ENCODE measurements at regions of chr1 and their contacts with region 1.

Region 1: DNA sequence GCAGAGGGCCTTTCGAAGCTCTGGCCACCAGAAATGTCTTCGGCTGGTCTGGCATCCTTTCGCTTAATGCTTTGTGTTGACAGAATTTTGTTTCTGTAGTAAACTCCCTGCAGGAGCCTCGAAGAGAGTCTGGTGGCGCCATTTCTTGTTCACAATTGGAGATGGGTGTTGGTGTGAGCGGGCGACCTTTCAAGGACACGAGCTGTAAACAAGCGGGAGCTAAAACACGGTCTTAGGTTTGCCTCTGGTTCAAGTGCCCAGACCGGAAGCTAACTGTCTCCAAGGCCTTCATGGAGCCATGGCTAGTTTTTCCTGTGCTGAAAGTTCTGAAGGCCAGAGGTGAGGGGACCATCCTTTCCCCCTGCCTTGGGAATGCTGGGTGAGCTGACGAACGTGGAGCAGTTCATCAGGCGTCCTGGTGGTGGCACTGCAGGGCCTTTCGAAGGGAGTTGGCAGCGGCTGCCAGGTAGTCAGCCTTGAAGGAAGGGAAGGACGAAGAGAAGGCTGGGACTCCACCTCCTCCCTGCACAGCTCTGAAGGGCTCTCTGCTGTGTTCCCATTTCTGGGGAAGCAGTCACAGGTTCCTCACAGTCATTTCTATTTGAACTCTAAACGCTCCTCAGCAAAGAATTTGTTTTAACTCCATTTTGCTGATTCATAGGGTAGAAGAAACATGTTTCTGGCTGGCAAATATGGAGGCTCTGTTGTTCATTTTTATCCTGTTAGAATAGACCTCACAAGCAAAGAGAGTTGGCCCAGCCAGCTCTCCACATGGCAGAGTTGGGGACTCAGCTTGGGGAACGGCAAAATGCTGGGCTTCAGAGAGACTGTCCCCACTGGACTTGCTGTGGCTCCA is 35.2 kb downstream of the URB2 start:
- DNase-seq: peak; percentile 90
- H3K4me3 Mint-ChIP-seq: no peak overlapping the region
- H3K27ac Mint-ChIP-seq: no peak overlapping the region
- H3K4me1 Mint-ChIP-seq: peaks cover 11% of the 10 kb centered on the region
- H3K27me3 Mint-ChIP-seq: no peaks in the 10 kb centered on the region

Region 2: DNA sequence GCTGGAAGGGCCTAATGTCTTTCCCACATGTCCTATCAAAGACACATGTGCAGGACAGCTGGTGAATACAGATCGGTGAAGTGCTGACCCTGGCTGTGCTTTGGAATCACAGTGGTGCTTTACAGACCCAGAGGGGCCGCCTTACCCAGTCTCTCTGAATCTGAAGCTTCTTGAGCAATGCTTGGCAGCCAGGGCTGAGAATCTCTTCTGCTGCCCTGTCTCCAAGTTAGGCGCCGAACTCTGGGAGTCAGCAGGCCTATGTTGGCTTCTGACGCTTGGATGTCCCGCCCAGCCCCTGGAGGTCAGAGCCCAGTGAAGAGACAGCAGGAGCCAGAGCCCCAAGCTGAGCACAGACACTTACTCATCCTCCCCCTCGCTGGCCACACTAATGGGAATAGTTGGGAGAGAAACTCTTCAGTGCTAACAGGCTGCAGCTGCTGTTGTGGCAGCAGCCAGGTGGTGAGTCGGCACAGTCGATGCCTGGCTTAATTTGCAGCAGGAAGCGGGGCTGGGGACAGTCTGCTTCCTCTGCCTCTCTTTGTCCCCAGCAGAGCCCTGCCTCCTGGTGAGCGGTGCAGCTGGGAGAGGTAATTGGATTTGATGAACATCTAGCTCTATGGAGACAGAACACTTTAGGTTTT is 32.9 kb after region 1 on chr1:
- intact Hi-C with region 1: no loop called
- DNase-seq: peak; percentile 50
- H3K4me3 Mint-ChIP-seq: no peak overlapping the region
- H3K27ac Mint-ChIP-seq: no peak overlapping the region
- H3K4me1 Mint-ChIP-seq: peaks cover 12% of the 10 kb centered on the region
- H3K27me3 Mint-ChIP-seq: peaks cover 2% of the 10 kb centered on the region

Region 3: DNA sequence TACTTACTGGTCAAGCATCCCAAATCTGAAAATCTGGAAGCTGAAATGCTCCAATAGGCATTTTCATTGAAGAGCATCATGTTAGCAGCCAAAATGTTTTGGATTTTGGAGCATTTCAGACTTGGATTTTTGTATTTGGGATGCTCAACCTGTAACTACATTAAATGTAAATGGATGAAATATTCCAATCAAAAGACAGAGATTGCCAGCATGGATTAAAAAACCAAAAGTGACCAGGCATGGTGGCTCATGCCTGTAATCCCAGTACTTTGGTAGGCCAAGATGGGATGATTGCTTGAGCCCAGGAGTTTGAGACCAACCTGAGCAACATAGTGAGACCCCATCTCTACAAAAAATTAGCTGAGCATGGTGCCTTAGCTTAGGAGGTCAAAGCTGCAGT is 75.1 kb after region 1 on chr1:
- intact Hi-C with region 1: loop called (anchors 5 kb)
- DNase-seq: no peak
- H3K4me3 Mint-ChIP-seq: no peak overlapping the region
- H3K27ac Mint-ChIP-seq: no peak overlapping the region
- H3K4me1 Mint-ChIP-seq: peaks cover 2% of the 10 kb centered on the region
- H3K27me3 Mint-ChIP-seq: peaks cover 7% of the 10 kb centered on the region

Region 4: GRCh38 chr1:230104395-230105244 is 443.4 kb after region 1 on chr1:
- intact Hi-C with region 1: loop called (anchors 5 kb)
- DNase-seq: peak; percentile 84
- H3K4me3 Mint-ChIP-seq: peak overlapping the region; percentile 77
- H3K27ac Mint-ChIP-seq: peak overlapping the region; percentile 88
- H3K4me1 Mint-ChIP-seq: peaks cover 81% of the 10 kb centered on the region
- H3K27me3 Mint-ChIP-seq: no peaks in the 10 kb centered on the region

Region 5: GRCh38 chr1:230243583-230244353 is 582.5 kb after region 1 on chr1:
- intact Hi-C with region 1: loop called (anchors 1 kb)
- DNase-seq: no peak
- H3K4me3 Mint-ChIP-seq: no peak overlapping the region
- H3K27ac Mint-ChIP-seq: peak overlapping the region; percentile 68
- H3K4me1 Mint-ChIP-seq: peaks cover 40% of the 10 kb centered on the region
- H3K27me3 Mint-ChIP-seq: no peaks in the 10 kb centered on the region

Measured in activated CD4-positive, alpha-beta T cell treated with anti-CD3 and anti-CD28 coated beads, Interleukin-2, amount 10 ng/mL, durations not matched to agents 24 days and 14 days (primary cell).